ENCODE measurements at regions of chr19 and their contacts with region 1.

Region 1: GRCh38 chr19:34974646-34975045 is 10.6 kb upstream of the ZNF792 start:
- DNase-seq: no peak
- ATAC-seq: no peak
- H3K4me3 ChIP-seq: no peak overlapping the region
- H3K27ac ChIP-seq: no peak overlapping the region
- H3K4me1 ChIP-seq: no peaks in the 10 kb centered on the region
- H3K27me3 ChIP-seq: no peaks in the 10 kb centered on the region
- CTCF ChIP-seq: no peak

Region 2: DNA sequence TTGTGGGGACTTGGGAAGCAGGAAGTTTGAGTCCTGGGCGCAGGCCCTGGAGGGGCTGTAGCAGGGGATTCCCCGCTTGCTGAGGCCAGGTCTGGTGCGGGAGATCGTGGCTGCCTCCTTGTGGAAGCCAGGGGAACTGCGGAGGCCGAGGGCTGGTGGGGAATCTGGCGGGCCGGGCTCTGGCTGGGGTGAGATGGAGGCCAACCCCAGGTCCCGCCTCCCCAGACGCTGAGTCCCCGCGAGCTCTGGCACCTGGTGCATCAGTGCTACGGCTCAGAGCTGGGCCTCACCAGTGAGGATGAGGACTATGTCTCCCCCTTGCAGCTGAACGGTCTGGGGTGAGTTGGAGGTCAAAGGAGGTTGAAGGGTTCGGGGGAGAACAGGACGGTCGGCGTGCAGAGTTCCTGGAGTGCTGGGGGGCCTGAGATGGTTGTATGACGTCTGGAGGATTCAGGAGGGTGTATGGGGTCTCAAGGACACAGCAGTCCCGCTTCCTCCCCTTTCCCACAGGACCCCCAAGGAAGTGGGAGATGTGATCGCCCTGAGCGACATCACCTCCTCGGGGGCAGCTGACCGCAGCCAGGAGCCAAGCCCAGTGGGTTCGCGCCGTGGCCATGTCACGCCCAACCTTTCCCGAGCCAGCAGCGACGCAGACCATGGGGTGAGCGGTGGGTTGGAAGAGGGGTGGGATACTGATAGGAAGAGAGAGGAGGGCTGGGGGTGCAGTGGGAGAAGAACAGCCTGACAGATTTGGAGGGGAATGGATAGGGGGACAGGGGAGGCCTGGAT is 38.6 kb after region 1 on chr19:
- CTCF ChIA-PET with region 1: interaction called, 3 read pairs
- POLR2A ChIA-PET with region 1: no interaction called
- in situ Hi-C with region 1: no loop called
- intact Hi-C with region 1: loop called (anchors 5 kb)
- DNase-seq: peak; percentile 32
- ATAC-seq: peak; percentile 81
- H3K4me3 ChIP-seq: no peak overlapping the region
- H3K27ac ChIP-seq: no peak overlapping the region
- H3K4me1 ChIP-seq: no peaks in the 10 kb centered on the region
- H3K27me3 ChIP-seq: no peaks in the 10 kb centered on the region
- CTCF ChIP-seq: peak; percentile 98

Region 3: DNA sequence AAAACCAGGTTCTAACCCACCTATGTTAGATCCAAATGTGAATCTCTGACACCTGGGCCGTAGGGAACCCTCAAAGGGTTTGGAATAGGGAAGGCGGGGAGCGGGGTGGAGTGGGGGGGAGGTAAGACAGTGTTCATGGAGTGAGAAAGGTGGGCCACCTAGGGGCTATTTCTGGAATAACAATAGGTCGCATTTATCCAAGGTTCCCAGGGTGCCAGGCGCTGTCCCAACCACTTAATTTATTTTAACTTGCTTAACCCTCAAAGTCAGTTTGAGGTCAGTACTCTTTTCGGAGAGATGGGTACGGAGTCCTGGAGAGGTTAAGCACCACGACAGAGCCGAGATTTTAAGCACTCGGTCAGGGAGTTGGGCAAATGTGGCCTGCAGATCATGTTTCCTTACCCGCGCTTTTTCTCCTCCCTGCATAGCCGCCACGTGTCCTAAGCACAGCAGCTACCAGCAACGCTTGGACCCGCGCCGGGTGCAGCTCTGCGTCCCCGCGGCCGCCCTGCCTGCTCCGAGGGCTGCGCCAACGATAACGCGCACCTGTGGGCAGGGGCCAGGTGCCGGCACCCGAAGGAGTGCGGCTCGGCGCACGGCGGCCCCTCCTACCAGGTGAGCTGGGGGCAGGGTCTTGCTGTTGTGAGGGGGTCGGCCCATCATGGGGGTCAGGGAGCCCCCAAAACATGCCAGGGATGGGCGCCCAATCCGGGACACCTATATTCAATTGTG is 116.0 kb after region 1 on chr19:
- CTCF ChIA-PET with region 1: no interaction called
- POLR2A ChIA-PET with region 1: no interaction called
- in situ Hi-C with region 1: no loop called
- intact Hi-C with region 1: loop called (anchors 5 kb)
- DNase-seq: peak; percentile 36
- ATAC-seq: peak; percentile 95
- H3K4me3 ChIP-seq: peak overlapping the region; percentile 15 to 44
- H3K27ac ChIP-seq: no peak overlapping the region
- H3K4me1 ChIP-seq: peaks cover 8% of the 10 kb centered on the region
- H3K27me3 ChIP-seq: no peaks in the 10 kb centered on the region
- CTCF ChIP-seq: peak; percentile 93

Measured in Panc1 (cell line).